HEK293 (cell line): ENCODE measurements at regions of chrX and their contacts with region 1.

Region 1: DNA sequence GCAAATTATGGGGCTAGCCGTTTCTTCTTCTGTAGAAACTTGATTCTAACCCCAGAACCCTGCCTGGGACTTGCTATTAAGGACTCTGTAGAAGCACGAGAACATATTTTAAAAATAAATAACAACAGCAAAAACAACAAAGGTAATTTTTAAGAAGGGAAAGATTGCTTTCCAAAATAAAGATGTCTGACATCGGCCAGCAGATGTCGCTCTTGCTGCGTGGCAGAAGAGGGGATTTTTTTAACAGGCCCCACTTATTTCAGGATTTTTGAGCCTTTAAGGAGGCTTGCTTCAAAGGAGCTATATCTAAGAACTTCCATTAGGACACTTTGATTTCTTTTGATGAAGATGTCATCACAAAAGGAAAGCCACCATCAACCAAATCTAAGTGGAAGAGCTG is 62.8 kb upstream of the EGFL6 start:
- H3K4me3 ChIP-seq: no peak overlapping the region
- H3K27ac ChIP-seq: no peak overlapping the region
- H3K4me1 ChIP-seq: no peaks in the 10 kb centered on the region
- CTCF ChIP-seq: peak; percentile 23; the same call in 1 of the 2 replicates

Region 2: GRCh38 chrX:13518126-13518525 is 11.6 kb after region 1 on chrX:
- CTCF ChIA-PET with region 1: interaction called, 14 read pairs
- POLR2A ChIA-PET with region 1: no interaction called
- H3K4me3 ChIP-seq: no peak overlapping the region
- H3K27ac ChIP-seq: no peak overlapping the region
- H3K4me1 ChIP-seq: no peaks in the 10 kb centered on the region
- CTCF ChIP-seq: no peak

Region 3: DNA sequence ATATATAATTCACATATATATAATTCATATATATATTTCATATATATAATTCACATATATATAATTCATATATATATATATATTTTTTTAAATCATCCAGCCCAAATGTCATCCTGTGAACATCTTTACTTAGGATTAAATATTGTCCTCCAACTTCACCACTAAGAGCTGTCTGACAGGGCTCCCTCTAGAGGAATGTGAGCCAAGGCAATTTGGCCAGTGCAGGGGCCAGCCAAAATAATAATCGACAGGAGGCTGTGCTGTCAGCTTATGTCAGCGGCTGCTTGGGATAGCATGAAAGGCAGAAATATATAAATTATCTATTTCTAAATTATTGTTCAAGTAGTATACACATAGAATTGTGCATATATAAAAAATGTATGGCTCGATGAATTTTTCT is 92.3 kb after region 1 on chrX:
- CTCF ChIA-PET with region 1: interaction called, 26 read pairs
- POLR2A ChIA-PET with region 1: no interaction called
- H3K4me3 ChIP-seq: no peak overlapping the region
- H3K27ac ChIP-seq: no peak overlapping the region
- H3K4me1 ChIP-seq: no peaks in the 10 kb centered on the region
- CTCF ChIP-seq: no peak

Region 4: GRCh38 chrX:13646154-13646549 is 139.6 kb after region 1 on chrX:
- CTCF ChIA-PET with region 1: interaction called, 86 read pairs
- POLR2A ChIA-PET with region 1: no interaction called
- H3K4me3 ChIP-seq: no peak overlapping the region
- H3K27ac ChIP-seq: no peak overlapping the region; the same call in 1 of the 2 replicates
- H3K4me1 ChIP-seq: peaks cover 5% of the 10 kb centered on the region; the same call in 1 of the 2 replicates
- CTCF ChIP-seq: no peak; the same call in 1 of the 2 replicates

Region 5: DNA sequence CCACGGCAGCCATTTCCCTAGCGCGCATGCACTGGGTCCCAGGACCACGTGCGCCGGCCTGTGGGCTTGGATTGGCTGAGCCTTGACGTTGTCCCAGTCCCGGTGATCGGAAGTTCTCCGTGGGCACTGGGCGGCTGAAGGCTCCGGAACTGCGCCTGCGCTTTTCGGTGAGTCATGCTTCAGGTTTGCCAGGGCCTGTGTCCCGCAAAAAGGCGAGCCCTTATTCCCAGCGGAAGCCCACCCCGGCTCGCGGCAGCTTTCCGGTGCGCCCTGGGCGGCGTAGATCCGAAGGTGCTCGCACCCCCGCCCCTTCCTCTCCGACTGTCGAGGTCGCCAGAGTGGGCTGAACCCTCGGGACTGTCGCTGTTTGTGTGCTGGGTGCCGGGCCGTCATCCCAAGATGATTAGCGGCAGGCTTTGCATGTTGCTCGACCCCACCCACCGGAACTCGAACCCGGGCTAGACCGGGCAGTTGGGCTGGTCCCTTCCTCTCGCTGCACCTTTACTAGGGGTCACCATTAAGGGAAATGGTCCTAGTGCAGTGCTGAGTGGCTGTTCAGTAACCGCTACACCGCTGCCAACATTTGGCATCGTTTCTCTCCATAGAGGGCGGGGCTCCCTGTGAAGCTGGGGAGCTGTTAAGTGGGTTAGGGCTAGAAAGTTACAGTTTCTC is 146.6 kb after region 1 on chrX and contains the start of gene TCEANC:
- CTCF ChIA-PET with region 1: interaction called, 17 read pairs
- POLR2A ChIA-PET with region 1: interaction called, 4 read pairs
- H3K4me3 ChIP-seq: peak within 1 kb of the TSS; percentile 51
- H3K27ac ChIP-seq: peak within 1 kb of the TSS; percentile 99
- H3K4me1 ChIP-seq: peaks cover 6% of the 10 kb centered on the region
- CTCF ChIP-seq: no peak; the same call in 1 of the 2 replicates

Region 6: GRCh38 chrX:13750204-13750603 is 243.6 kb after region 1 on chrX:
- CTCF ChIA-PET with region 1: interaction called, 19 read pairs
- POLR2A ChIA-PET with region 1: no interaction called
- H3K4me3 ChIP-seq: no peak overlapping the region
- H3K27ac ChIP-seq: no peak overlapping the region
- H3K4me1 ChIP-seq: no peaks in the 10 kb centered on the region
- CTCF ChIP-seq: no peak

Region 7: GRCh38 chrX:14029425-14030173 is 523.0 kb after region 1 on chrX and contains the start of gene GEMIN8:
- CTCF ChIA-PET with region 1: interaction called, 50 read pairs
- POLR2A ChIA-PET with region 1: no interaction called
- H3K4me3 ChIP-seq: peak within 1 kb of the TSS; percentile 51
- H3K27ac ChIP-seq: peak within 1 kb of the TSS; percentile 91
- H3K4me1 ChIP-seq: peaks cover 17% of the 10 kb centered on the region
- CTCF ChIP-seq: peak; percentile 30; the same call in 1 of the 2 replicates